ENCODE measurements at regions of chr17 and their contacts with region 1.

Region 1: DNA sequence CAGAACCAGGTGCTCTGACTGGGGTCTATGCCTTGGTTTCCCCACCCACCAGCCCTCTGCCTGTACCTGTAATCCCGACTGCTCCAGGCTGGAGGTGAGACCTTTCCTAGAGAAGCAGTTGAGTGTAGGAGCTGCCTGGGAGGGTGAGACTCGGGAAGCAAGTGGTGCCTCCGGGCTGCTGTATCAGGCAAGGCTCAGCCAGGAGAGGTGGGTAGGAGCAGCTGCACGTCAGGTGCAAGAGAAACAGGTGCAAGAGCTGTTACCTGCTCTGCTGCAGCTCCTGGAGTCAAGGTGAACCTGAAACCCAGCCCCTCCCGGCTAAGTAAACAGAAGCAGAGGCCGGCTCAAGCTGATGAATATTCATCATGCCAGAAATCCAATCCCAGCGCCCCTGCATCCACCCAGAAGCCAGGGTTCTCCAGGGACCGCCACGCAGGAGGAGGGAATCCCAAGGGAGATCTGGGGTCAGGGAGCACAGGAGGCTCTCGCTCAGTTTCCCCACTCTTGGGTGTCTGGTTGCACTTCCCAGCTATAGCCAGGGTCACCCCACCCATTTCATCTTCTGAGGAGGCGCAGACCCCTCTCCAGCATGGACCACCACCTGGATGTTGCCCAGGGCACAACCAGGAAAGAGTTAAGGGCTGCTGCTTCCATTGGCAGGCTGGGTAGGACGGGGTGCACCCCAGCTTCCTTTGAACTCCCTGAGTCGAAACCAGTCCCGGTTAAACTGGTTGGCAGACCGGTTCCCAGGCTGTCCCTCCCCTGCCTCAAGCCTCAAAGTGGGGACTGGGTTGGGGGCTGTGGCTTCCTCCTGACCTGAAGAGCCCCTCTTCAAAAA is at the start of gene PRR15L:
- DNase-seq: no peak
- H3K4me3 ChIP-seq: no peak within 1 kb of the TSS
- H3K27ac ChIP-seq: no peak within 1 kb of the TSS
- H3K4me1 ChIP-seq: no peaks in the 10 kb centered on the region
- H3K27me3 ChIP-seq: no peaks in the 10 kb centered on the region
- CTCF ChIP-seq: no peak
- POLR2A ChIP-seq: no peak
- total RNA-seq, gene PRR15L: 0.19 TPM in 1 of 9 donors, not detected in the others

Region 2: GRCh38 chr17:47902039-47902744 is 55.6 kb before region 1 on chr17:
- intact Hi-C with region 1: loop called in 1 of 2 experiments (anchors 5 kb)
- DNase-seq: no peak
- H3K4me3 ChIP-seq: no peak overlapping the region
- H3K27ac ChIP-seq: no peak overlapping the region
- H3K4me1 ChIP-seq: peaks cover 8 to 44% of the 10 kb centered on the region in 2 donors
- H3K27me3 ChIP-seq: no peaks in the 10 kb centered on the region
- CTCF ChIP-seq: no peak
- POLR2A ChIP-seq: no peak

Region 3: GRCh38 chr17:48011405-48012150 is 53.8 kb after region 1 on chr17:
- intact Hi-C with region 1: loop called in 1 of 2 experiments (anchors 10 kb)
- DNase-seq: peak in 3 of 7 donors; percentile 43 to 76 (median 47)
- H3K4me3 ChIP-seq: peak overlapping the region in 1 of 4 donors; percentile 38
- H3K27ac ChIP-seq: peak overlapping the region in 1 of 5 donors; percentile 60
- H3K4me1 ChIP-seq: peaks cover 4 to 6% of the 10 kb centered on the region in 2 donors
- H3K27me3 ChIP-seq: peaks cover 3% of the 10 kb centered on the region
- CTCF ChIP-seq: peak; percentile 11 to 45 (median 34)
- POLR2A ChIP-seq: no peak